ENCODE measurements at regions of chr5 and their contacts with region 1.

Region 1: GRCh38 chr5:80101993-80102392 is 66.8 kb downstream of the THBS4 start:
- DNase-seq: no peak
- H3K4me3 Mint-ChIP-seq: no peak overlapping the region
- H3K27ac Mint-ChIP-seq: no peak overlapping the region
- H3K4me1 Mint-ChIP-seq: no peaks in the 10 kb centered on the region
- H3K27me3 Mint-ChIP-seq: no peaks in the 10 kb centered on the region
- CTCF ChIP-seq: no peak

Region 2: DNA sequence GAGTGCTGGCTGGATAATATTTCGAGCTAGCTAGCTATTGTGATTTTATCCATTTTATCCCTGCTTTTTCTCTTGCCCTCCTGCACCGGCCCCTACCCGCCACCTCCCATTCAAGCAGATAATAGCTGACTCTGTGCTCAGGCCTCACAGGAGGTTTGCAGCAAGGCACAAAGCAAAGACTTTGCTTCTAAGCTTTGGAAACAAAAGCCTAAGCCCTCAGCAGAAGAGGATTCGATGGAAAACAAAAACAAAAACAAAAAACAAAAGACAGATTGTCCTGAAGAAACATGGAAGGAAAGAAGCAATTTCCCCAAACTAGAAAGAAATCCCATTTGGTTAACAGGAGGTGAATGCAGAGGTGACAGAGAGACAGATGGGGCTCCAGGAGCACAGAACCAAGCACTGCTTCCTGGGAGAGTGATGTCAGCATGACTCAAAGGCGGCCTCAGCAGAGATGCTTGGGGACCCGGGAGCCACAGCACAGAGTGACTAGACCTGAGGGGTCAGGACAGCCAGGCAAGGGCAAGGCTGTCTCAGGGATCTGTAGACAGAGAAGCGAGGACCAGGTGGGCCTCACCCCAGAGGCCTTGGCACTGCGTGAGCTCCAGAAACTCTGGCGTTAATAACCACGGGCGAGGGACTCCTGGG is 139.3 kb before region 1 on chr5:
- CTCF ChIA-PET with region 1: no interaction called
- POLR2A ChIA-PET with region 1: no interaction called
- intact Hi-C with region 1: no loop called
- DNase-seq: peak; percentile 4
- H3K4me3 Mint-ChIP-seq: no peak overlapping the region
- H3K27ac Mint-ChIP-seq: no peak overlapping the region
- H3K4me1 Mint-ChIP-seq: no peaks in the 10 kb centered on the region
- H3K27me3 Mint-ChIP-seq: no peaks in the 10 kb centered on the region
- CTCF ChIP-seq: no peak

Region 3: DNA sequence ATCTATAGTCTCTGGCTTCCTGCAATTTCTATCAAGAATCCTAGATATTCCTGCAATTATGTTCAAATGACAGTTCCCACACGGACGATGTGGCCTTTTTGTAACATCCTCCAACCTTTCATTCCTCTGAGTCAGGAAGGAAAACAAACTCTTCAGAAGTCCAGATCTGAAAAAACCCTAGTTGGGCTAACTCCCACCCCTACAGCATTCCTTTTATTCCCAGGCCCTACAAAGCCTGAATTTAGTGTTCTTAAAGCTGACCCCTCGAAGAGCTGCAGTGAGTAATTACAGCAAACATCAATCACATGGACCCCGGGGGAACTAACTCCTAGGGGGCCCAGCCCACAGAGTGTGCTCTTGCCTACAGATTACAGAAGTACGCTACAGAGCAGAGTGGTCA is 54.2 kb after region 1 on chr5:
- CTCF ChIA-PET with region 1: no interaction called
- POLR2A ChIA-PET with region 1: no interaction called
- intact Hi-C with region 1: no loop called
- DNase-seq: no peak
- H3K4me3 Mint-ChIP-seq: no peak overlapping the region
- H3K27ac Mint-ChIP-seq: peak overlapping the region; percentile 42
- H3K4me1 Mint-ChIP-seq: no peaks in the 10 kb centered on the region
- H3K27me3 Mint-ChIP-seq: no peaks in the 10 kb centered on the region
- CTCF ChIP-seq: no peak

Region 4: DNA sequence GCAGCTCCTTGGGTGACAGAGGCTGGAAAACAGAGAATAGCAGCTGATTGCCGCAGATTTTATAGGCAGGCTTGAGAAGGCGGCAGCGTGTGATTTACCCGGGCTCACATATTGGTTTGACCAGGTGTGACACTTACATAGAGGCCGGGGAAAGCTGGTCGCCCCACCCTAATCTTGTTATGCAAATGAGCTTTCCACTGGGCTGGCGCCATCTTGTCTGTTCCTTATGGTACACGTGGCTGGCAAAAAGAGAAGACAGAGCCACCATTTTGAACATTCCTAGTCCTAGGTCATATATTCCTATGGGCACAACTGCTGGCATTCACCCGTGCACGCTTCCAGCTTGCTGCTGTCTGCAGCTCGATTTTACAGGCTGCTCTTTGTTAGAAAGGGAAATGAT is 206.5 kb after region 1 on chr5:
- CTCF ChIA-PET with region 1: interaction called, 304 read pairs
- POLR2A ChIA-PET with region 1: no interaction called
- intact Hi-C with region 1: no loop called
- DNase-seq: no peak
- H3K4me3 Mint-ChIP-seq: no peak overlapping the region
- H3K27ac Mint-ChIP-seq: no peak overlapping the region
- H3K4me1 Mint-ChIP-seq: no peaks in the 10 kb centered on the region
- H3K27me3 Mint-ChIP-seq: no peaks in the 10 kb centered on the region
- CTCF ChIP-seq: no peak

Region 5: GRCh38 chr5:80407735-80408482 is 305.9 kb after region 1 on chr5 and contains the start of gene ZFYVE16:
- CTCF ChIA-PET with region 1: no interaction called
- POLR2A ChIA-PET with region 1: no interaction called
- intact Hi-C with region 1: no loop called
- DNase-seq: peak; percentile 97
- H3K4me3 Mint-ChIP-seq: peak within 1 kb of the TSS; percentile 80
- H3K27ac Mint-ChIP-seq: peak within 1 kb of the TSS; percentile 98
- H3K4me1 Mint-ChIP-seq: peaks cover 19% of the 10 kb centered on the region
- H3K27me3 Mint-ChIP-seq: no peaks in the 10 kb centered on the region
- CTCF ChIP-seq: peak; percentile 38
- total RNA-seq, gene ZFYVE16: 34.8 and 36.9 TPM in 2 replicates